ENCODE measurements at regions of chr11 and their contacts with region 1.

Region 1: DNA sequence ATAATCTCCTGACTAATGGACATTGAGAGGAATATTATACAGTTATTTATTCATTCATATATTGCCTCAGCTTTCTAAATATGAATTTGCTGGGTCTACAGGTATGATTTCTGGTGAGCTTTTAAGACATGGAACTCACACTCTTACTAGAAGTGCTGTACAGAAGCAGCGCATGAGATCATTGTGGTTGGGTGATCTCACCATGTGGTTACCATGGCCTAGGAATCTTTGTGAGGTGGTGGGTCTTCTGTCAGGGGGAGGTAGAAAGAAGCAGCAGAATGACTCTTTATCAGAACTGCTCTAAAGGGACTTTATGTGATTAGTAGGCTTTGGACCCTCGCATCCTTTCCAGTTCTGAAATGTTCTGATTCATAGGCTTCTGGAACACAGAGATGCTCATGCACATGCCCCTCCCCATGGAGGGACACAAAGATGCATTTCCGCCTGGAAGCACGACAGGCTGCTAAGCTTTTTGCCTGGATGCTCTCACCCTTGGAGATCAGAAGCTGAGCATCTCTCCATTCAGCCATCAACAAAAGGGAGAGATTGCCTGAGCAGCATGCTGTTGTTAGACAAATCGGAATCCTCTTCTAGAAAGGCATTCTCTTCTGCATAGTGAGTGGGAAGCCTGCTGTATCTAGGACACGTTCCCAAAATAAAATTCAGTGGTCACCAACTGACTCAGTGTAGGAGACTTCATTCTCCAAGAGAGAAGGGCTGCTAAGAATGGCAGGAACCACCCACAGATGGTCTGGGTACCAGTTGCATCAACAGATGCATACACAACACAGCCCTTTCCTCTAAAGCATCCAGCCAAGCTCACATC is 51.3 kb downstream of the KIRREL3 start:
- DNase-seq: no peak
- H3K4me3 ChIP-seq: no peak overlapping the region
- H3K27me3 ChIP-seq: no peaks in the 10 kb centered on the region
- CTCF ChIP-seq: no peak

Region 2: GRCh38 chr11:128716661-128717210 is 1767.5 kb after region 1 on chr11:
- CTCF ChIA-PET with region 1: no interaction called
- POLR2A ChIA-PET with region 1: interaction called, 12 read pairs
- DNase-seq: no peak
- H3K4me3 ChIP-seq: no peak overlapping the region
- H3K27me3 ChIP-seq: no peaks in the 10 kb centered on the region
- CTCF ChIP-seq: no peak